ENCODE measurements at regions of chr9 and their contacts with region 1.

Region 1: DNA sequence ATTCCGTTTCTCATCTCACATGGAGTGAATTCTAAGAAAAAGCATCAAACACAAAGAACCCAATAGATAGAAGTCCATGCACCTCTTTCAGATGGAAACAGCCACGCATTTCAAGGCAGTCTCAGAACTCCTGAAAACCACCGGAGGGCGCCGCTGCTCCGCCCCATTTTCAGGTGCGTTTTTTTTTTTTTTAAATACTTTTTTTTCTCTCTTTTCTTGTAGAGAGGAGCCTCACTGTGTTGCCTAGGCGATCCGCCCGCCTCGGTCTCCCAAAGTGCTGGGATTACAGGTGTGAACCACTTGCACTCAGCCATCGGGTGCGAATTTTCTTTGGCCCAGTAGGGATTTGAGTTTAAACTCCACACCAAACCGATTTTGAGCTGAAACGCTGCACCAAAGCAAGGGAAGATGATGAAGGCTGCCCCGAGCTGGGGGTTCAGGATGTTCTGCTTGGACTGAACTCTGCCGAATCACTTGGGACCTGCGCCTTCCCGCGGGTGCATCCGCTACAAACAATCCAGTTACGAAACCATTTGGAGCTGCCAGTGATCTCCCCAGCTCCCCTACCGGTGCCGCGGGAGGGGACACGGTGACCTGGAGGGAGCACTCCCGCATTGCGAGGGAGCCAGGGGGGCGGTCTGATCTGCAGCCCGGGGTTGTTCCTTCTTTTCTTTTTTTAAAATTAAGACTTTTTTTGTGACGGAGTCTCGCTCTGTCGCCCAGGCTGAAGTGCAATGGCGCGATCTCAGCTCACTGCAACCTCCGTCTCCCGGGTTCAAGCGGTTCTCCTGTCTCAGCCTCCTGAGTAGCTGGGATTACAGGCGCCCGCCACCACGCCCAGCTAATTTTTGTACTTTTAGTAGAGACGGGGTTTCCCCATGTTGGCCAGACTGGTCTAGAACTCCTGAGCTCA is 1.4 kb downstream of the PTGR1 start:
- DNase-seq: peak; percentile 81
- H3K4me3 Mint-ChIP-seq: peak overlapping the region; percentile 80
- H3K27ac Mint-ChIP-seq: no peak overlapping the region
- H3K4me1 Mint-ChIP-seq: peaks cover 12% of the 10 kb centered on the region
- H3K27me3 Mint-ChIP-seq: peaks cover 27% of the 10 kb centered on the region

Region 2: GRCh38 chr9:111631071-111631971 is 33.2 kb after region 1 on chr9 and contains the start of gene DNAJC25:
- CTCF ChIA-PET with region 1: interaction called, 3 read pairs
- intact Hi-C with region 1: loop called (anchors 1 kb)
- DNase-seq: peak; percentile 97
- H3K4me3 Mint-ChIP-seq: peak within 1 kb of the TSS; percentile 92
- H3K27ac Mint-ChIP-seq: peak within 1 kb of the TSS; percentile 79
- H3K4me1 Mint-ChIP-seq: peaks cover 42% of the 10 kb centered on the region
- H3K27me3 Mint-ChIP-seq: no peaks in the 10 kb centered on the region
- total RNA-seq, gene DNAJC25: 3.4 to 3.9 TPM

Region 3: DNA sequence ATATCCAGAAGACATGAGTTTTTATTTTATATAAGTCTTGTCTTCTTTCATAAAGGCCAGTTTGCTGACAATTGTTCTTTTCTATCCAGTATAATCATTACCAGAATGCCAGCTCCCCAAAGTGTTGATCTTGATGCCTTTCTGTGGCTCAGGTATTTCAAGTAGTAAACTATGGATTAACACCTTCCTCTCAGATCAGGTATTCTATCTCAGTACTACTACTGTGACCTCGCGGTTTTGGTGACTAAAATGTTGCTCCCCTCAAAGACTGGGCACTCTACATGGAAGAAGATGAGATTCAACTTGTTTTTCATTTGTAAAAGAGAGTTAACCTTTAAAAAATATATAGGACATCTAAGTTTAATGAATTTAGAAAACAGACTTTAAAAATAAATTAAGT is 121.5 kb after region 1 on chr9:
- CTCF ChIA-PET with region 1: interaction called, 3 read pairs
- intact Hi-C with region 1: loop called (anchors 1 kb)
- DNase-seq: no peak
- H3K4me3 Mint-ChIP-seq: no peak overlapping the region
- H3K27ac Mint-ChIP-seq: no peak overlapping the region
- H3K4me1 Mint-ChIP-seq: no peaks in the 10 kb centered on the region
- H3K27me3 Mint-ChIP-seq: no peaks in the 10 kb centered on the region

Region 4: GRCh38 chr9:111975709-111976108 is 377.6 kb after region 1 on chr9:
- CTCF ChIA-PET with region 1: no interaction called
- intact Hi-C with region 1: loop called (anchors 2 kb)
- DNase-seq: peak; percentile 55
- H3K4me3 Mint-ChIP-seq: no peak overlapping the region
- H3K27ac Mint-ChIP-seq: no peak overlapping the region
- H3K4me1 Mint-ChIP-seq: peaks cover 8% of the 10 kb centered on the region
- H3K27me3 Mint-ChIP-seq: no peaks in the 10 kb centered on the region

Region 5: DNA sequence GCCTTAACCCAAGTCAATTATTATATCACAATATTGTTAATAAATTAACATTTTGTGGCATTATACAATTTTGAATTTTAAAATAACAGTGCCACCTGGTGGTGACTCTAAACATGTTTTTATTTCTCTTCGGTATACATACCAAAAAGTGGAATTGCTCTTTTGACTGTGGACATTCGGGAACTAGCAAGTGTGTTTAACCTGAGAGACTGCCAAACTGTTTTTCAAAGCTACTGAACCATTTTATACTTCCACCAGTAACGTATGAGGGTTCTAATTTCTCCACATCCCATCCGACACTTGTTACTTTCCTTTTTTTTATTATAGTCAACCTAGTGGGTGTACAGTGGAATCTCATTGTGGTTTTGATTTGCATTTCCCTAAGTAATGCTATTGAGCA is 763.5 kb after region 1 on chr9:
- CTCF ChIA-PET with region 1: interaction called, 3 read pairs
- intact Hi-C with region 1: loop called (anchors 2 kb)
- DNase-seq: no peak
- H3K4me3 Mint-ChIP-seq: no peak overlapping the region
- H3K27ac Mint-ChIP-seq: no peak overlapping the region
- H3K4me1 Mint-ChIP-seq: peaks cover 12% of the 10 kb centered on the region
- H3K27me3 Mint-ChIP-seq: no peaks in the 10 kb centered on the region